OCI-LY7 (cell line): ENCODE measurements at regions of chr4 and their contacts with region 1.

Region 1: DNA sequence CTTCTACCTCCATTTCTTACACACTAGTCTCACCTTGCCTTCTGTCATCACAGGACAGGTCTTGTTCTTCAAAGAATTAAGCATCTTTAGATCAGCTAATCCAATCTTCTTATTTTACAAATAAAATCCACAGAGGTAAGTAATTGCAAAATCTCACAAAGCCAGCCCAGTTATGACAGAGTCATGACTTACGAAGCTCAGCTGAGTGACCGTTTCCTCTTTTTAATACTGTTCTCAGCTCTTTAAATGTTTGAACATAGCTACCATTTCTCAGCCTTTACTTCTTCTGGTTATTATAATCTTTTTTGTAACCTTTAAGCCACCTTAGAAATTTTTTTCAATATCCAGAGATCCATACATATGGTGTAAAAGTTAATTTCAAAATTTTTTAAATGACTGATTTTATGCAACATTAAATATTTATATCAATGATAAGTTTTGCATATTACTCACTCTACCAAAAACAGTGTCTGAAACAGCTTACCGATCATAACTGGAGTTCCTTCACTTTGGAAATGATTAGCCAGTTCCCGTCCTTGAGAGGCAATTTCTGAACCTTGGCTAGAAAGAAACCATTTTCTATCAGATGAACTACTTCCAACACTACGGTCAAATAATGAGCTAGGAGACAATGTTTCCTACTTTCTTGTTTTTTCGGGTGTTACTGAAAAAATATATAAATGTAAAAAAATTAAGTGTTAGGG is 8.8 kb downstream of the ANKRD37 start:
- DNase-seq: no peak
- H3K4me3 ChIP-seq: no peak overlapping the region
- H3K27ac ChIP-seq: no peak overlapping the region
- H3K4me1 ChIP-seq: peaks cover 3% of the 10 kb centered on the region
- CTCF ChIP-seq: no peak

Region 2: GRCh38 chr4:185227131-185227551 is 178.3 kb before region 1 on chr4:
- CTCF ChIA-PET with region 1: no interaction called
- POLR2A ChIA-PET with region 1: no interaction called
- intact Hi-C with region 1: no loop called
- DNase-seq: no peak
- H3K4me3 ChIP-seq: no peak overlapping the region
- H3K27ac ChIP-seq: no peak overlapping the region
- H3K4me1 ChIP-seq: no peaks in the 10 kb centered on the region
- CTCF ChIP-seq: peak; percentile 43; the same call in 1 of the 2 replicates

Region 3: DNA sequence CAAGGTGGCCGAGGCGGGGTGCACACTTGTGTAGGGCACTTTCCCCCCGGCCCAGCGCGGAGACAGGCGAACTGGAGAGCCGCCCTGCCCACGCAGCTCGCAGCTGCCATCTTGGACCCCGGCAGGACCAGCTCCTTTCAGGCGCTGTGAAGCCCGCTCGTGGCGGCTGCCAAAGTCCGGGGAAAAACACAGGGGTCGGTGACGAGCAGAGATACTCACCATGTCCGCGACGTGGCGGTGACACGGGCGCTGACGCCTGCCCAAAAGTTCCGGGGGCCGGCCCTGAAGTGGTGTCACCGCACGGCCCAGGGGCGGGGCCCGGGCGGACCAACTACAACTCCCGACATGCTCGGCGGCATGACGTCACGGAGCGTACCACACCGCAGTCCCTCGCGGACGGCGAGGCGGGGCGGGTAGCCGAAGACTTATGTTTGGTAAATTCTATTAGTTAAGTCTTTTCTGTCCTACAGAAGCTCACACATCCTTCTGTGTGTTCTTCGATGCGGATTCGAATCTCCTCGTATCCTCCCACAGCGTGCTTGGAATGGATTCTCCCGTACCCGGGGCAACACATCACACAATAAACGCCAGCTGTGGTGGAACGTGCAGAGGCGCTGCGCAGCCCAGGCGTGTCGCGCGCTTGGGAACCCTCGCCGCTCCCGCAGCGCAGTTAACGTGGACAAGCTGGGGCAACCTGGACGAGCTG is 20.4 kb after region 1 on chr4 and contains the start of gene UFSP2:
- CTCF ChIA-PET with region 1: no interaction called
- POLR2A ChIA-PET with region 1: interaction called, 21 read pairs
- intact Hi-C with region 1: no loop called
- DNase-seq: peak; percentile 94
- H3K4me3 ChIP-seq: peak within 1 kb of the TSS; percentile 88
- H3K27ac ChIP-seq: peak within 1 kb of the TSS; percentile 54
- H3K4me1 ChIP-seq: peaks cover 18% of the 10 kb centered on the region
- CTCF ChIP-seq: no peak
- total RNA-seq, gene UFSP2: 14.0 and 17.3 TPM in 2 replicates

Region 4: DNA sequence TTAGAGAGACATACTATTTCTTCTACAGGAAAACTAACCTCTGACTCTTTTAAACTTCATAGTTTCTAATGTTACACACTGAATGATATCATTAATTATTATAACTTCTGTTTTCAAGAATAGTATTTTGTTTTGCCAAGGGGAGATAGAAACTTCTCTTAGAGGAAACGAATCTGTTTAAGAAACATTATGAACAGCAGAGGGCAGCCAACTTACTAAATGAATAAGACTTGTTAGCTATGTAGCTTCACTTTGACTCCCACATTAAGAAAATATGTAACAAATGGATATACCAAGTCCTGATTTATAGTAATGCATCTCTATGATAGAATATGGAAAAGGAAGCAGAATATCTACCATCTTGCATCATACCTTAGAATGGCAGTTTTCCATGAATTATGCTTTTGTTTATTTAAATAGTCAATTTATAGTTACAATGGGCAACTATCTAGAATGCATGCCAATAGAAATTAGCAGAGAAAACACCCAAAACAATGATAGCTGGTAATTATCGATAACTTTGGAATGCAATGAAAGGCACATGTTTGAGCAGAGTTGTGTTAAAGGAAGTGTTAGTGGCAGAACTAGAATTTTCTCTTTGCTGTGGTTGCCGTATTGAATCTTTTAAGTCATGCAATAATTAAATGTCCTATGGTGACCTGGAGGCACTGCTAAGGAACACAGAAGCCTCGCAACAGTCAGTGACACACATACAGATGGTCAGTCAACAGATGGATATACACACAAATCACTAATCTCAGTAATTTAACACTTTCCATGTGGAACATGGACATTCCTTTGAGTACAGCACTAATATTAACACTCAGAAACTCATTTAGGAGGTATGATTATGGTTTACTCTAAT is 235.6 kb after region 1 on chr4:
- CTCF ChIA-PET with region 1: no interaction called
- POLR2A ChIA-PET with region 1: no interaction called
- intact Hi-C with region 1: no loop called
- DNase-seq: peak; percentile 81
- H3K4me3 ChIP-seq: no peak overlapping the region
- H3K27ac ChIP-seq: no peak overlapping the region
- H3K4me1 ChIP-seq: no peaks in the 10 kb centered on the region
- CTCF ChIP-seq: peak; percentile 84

Region 5: GRCh38 chr4:186351668-186352194 is 946.3 kb after region 1 on chr4:
- CTCF ChIA-PET with region 1: no interaction called
- POLR2A ChIA-PET with region 1: no interaction called
- intact Hi-C with region 1: no loop called
- DNase-seq: no peak
- H3K4me3 ChIP-seq: no peak overlapping the region
- H3K27ac ChIP-seq: no peak overlapping the region
- H3K4me1 ChIP-seq: no peaks in the 10 kb centered on the region
- CTCF ChIP-seq: no peak